Caco-2 (cell line): ENCODE measurements at regions of chr4 and their contacts with region 1.

Region 1: DNA sequence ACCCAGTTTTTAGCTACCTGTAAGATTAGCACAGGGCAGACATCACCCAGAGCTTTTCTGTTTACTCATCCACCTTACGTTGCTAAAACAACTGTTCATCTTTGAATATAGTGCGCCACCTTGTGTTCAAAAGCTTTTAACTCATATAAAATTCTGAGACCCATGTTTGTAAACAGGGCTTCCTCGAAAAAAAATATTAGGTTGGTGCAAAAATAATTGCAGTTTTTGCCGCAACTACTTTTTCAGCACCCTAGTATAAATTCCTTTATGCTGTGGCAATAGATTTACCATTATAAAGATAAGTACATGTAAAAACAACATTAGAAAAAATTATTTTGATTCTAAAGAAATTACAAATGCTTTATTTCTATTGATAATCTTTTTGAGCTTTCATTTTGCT is 147.9 kb downstream of the LRBA start:
- DNase-seq: peak in 1 of 2 experiments; percentile 78
- H3K4me3 ChIP-seq: no peak overlapping the region
- H3K4me3 Mint-ChIP-seq: no peak overlapping the region
- H3K27ac Mint-ChIP-seq: no peak overlapping the region
- H3K4me1 ChIP-seq: 0 out of 2 replicates have a peak, but pooled peaks cover 4% of the 10 kb centered on the region
- H3K4me1 Mint-ChIP-seq: no peaks in the 10 kb centered on the region
- H3K27me3 ChIP-seq: no peaks in the 10 kb centered on the region
- H3K27me3 Mint-ChIP-seq: no peaks in the 10 kb centered on the region
- CTCF ChIP-seq: peak; percentile 40 to 45

Region 2: DNA sequence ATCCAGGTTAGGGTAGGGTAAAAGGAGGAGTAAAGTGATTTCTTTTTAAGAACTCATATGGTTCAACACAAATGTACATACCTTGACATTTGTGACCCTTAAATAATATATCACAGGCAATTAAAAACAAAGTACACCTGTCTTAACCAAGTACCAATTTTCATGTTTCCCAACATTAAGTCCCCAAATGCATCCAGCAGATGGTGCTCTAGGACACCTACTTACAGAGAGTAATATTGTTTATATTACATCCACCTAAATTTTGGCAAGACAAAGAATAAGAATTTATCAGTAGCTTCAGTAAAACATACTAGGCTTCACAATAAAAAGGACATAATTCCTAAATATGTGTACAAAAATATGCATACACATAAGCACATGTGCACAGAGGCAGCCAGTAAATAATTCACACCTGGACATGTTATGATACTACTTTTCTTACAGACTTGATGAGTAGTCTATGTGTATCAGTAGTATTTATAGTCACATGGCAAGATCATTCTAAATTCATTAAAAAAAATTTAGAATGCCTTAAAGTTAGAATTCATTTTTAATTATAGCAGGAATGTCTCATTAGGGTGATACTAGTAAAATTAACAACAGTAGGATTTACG is 569.2 kb before region 1 on chr4:
- CTCF ChIA-PET with region 1: no interaction called
- POLR2A ChIA-PET with region 1: no interaction called
- intact Hi-C with region 1: loop called (anchors 1 kb)
- DNase-seq: peak in 1 of 2 experiments; percentile 39
- H3K4me3 ChIP-seq: no peak overlapping the region
- H3K4me3 Mint-ChIP-seq: no peak overlapping the region
- H3K27ac Mint-ChIP-seq: no peak overlapping the region
- H3K4me1 ChIP-seq: no peaks in the 10 kb centered on the region
- H3K4me1 Mint-ChIP-seq: no peaks in the 10 kb centered on the region
- H3K27me3 ChIP-seq: no peaks in the 10 kb centered on the region
- H3K27me3 Mint-ChIP-seq: no peaks in the 10 kb centered on the region
- CTCF ChIP-seq: peak; percentile 58 to 59

Region 3: GRCh38 chr4:150479657-150480056 is 387.5 kb before region 1 on chr4:
- CTCF ChIA-PET with region 1: no interaction called
- POLR2A ChIA-PET with region 1: no interaction called
- intact Hi-C with region 1: loop called (anchors 10 kb)
- DNase-seq: no peak
- H3K4me3 ChIP-seq: no peak overlapping the region
- H3K4me3 Mint-ChIP-seq: no peak overlapping the region
- H3K27ac Mint-ChIP-seq: no peak overlapping the region
- H3K4me1 ChIP-seq: no peaks in the 10 kb centered on the region
- H3K4me1 Mint-ChIP-seq: no peaks in the 10 kb centered on the region
- H3K27me3 ChIP-seq: no peaks in the 10 kb centered on the region
- H3K27me3 Mint-ChIP-seq: no peaks in the 10 kb centered on the region
- CTCF ChIP-seq: no peak

Region 4: GRCh38 chr4:150583287-150584110 is 283.6 kb before region 1 on chr4:
- CTCF ChIA-PET with region 1: no interaction called
- POLR2A ChIA-PET with region 1: no interaction called
- intact Hi-C with region 1: no loop called
- DNase-seq: no peak
- H3K4me3 ChIP-seq: no peak overlapping the region
- H3K4me3 Mint-ChIP-seq: no peak overlapping the region
- H3K27ac Mint-ChIP-seq: no peak overlapping the region
- H3K4me1 ChIP-seq: no peaks in the 10 kb centered on the region
- H3K4me1 Mint-ChIP-seq: no peaks in the 10 kb centered on the region
- H3K27me3 ChIP-seq: no peaks in the 10 kb centered on the region
- H3K27me3 Mint-ChIP-seq: no peaks in the 10 kb centered on the region
- CTCF ChIP-seq: no peak

Region 5: GRCh38 chr4:150722908-150723362 is 144.2 kb before region 1 on chr4:
- CTCF ChIA-PET with region 1: interaction called, 3 read pairs
- POLR2A ChIA-PET with region 1: no interaction called
- intact Hi-C with region 1: loop called (anchors 2 kb)
- DNase-seq: peak; percentile 42 to 68
- H3K4me3 ChIP-seq: no peak overlapping the region
- H3K4me3 Mint-ChIP-seq: no peak overlapping the region
- H3K27ac Mint-ChIP-seq: no peak overlapping the region
- H3K4me1 ChIP-seq: peaks cover 11% of the 10 kb centered on the region; the same call in 1 of the 2 replicates
- H3K4me1 Mint-ChIP-seq: peaks cover 6% of the 10 kb centered on the region
- H3K27me3 ChIP-seq: no peaks in the 10 kb centered on the region
- H3K27me3 Mint-ChIP-seq: no peaks in the 10 kb centered on the region
- CTCF ChIP-seq: peak in 1 of 2 experiments; percentile 31